Activated B cell treated with CpG ODN at 0.5 μM for 24 hours (primary cell): ENCODE measurements at regions of chr9 and their contacts with region 1.

Region 1: DNA sequence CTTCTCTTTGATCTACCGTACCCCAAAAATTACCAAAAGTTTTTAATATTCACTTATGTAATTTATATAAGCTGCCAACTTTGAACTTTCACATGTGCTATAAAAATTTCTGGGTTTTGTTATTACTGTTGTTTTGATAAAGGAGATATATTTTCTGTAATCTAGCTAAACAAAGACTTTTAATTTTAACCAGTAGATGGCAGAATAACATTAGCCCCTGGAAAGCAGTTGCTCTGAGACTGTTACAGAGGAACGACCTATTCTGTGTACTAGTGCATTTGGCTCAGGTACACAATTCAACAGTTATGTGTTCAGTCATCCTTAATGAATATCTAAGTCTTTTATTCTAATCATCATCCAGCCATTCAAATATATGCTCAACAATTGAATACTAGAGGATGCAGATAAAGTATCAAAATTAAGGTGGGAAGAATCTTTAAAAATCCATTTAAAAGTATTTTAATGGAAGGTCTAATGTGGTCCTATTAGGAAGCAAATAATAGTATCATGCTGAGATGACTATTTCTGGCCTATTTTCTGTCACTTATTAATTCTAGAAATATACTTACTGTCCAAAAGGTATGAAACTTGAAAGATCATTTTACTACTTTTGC is 8.6 kb downstream of the KLHL9 start:
- DNase-seq: no peak
- ATAC-seq: peak; percentile 81
- H3K4me3 Mint-ChIP-seq: no peak overlapping the region
- H3K27ac Mint-ChIP-seq: no peak overlapping the region
- H3K4me1 Mint-ChIP-seq: peaks cover 29% of the 10 kb centered on the region
- H3K27me3 Mint-ChIP-seq: no peaks in the 10 kb centered on the region
- CTCF ChIP-seq: peak; percentile 68

Region 2: DNA sequence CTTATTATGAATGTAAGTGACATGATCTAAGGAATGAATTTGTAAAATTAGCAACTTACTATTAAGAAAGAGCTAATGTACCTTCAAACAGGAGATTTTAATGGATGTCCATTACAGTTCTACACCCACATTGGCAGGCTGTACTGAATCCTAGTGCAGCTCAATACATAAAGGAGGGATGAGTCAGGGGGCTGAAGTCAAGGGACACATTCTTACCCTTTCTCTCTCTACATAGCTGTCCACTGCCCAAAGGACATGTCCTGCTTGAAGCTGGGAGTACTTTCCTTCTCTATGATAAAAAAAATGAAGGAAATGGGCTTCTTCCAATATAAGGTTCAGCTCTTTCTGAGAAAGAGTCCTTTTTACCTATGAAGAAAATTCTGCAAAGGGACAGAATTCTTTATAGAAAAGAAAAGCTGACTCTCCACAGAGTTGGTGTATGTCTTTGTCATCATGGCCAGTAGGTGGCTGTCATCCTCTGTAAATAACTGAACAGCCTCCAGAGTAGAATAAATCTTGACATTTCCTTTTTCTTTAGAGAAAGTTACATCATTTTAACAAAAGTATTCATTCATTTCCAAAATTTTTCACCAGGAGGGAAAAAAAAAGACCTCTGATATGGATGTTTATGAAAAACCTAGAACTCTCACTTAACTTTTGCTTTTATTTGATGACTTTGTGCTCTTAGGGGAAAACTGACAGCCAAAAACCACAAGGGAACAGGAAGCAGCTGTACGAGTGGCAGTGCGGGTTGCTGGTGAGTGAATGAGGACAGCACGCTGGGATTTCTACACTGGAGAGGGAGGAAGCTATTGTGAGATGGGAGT is 73.7 kb before region 1 on chr9:
- CTCF ChIA-PET with region 1: interaction called, 10 read pairs
- POLR2A ChIA-PET with region 1: no interaction called
- intact Hi-C with region 1: no loop called
- DNase-seq: no peak
- ATAC-seq: peak; percentile 61
- H3K4me3 Mint-ChIP-seq: no peak overlapping the region
- H3K27ac Mint-ChIP-seq: no peak overlapping the region
- H3K4me1 Mint-ChIP-seq: peaks cover 4% of the 10 kb centered on the region
- H3K27me3 Mint-ChIP-seq: peaks cover 25% of the 10 kb centered on the region
- CTCF ChIP-seq: no peak

Region 3: DNA sequence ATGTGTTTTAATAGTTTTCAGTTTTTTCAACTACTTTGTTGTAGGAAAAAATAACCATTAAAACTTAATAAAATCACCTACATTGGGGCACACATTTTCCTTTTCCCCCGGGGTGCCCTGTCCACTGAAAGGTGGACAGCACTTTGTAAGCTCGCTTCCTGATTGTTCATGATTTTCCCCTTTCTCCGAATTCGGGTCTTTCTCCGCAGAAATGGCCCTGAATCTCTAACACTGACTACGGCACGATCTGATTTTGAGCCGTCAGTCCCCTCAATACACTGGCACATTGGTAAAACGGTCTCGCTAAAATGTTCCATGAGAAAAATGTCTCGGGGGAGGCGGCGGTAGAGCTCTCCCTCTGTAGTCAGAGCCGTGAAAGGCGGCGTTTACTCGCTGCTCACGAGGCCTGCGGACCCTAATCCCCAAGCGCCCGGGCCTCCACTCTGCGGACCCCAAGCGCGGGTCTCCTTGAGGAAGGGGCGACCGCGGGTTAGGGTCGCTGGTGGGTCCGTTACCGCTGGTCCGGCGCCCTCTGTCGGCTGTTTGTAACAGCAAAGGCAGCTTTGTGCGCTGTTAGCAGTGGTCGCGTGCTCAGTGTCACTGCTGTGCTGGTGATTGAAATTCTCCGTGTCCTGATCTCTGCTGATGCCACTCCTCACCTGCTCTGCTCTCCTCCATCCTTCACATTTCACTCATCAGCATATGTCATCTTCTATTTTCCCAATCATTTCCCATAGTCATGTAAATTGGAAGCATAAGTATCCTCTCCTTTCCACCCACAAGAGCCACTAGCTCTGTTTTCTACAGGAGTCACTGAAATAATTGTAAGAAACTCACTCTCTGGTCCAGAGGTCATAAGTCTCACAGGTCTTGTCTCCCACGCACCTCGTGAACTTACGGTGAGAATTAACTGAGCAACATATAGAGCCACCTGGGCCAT is 69.4 kb after region 1 on chr9:
- CTCF ChIA-PET with region 1: interaction called, 79 read pairs
- POLR2A ChIA-PET with region 1: interaction called, 3 read pairs
- intact Hi-C with region 1: loop called (anchors 1 kb)
- DNase-seq: peak; percentile 47
- ATAC-seq: peak; percentile 65
- H3K4me3 Mint-ChIP-seq: peak overlapping the region; percentile 66
- H3K27ac Mint-ChIP-seq: no peak overlapping the region
- H3K4me1 Mint-ChIP-seq: peaks cover 12% of the 10 kb centered on the region
- H3K27me3 Mint-ChIP-seq: peaks cover 57% of the 10 kb centered on the region
- CTCF ChIP-seq: no peak

Region 4: GRCh38 chr9:21434202-21435014 is 107.8 kb after region 1 on chr9:
- CTCF ChIA-PET with region 1: interaction called, 12 read pairs
- POLR2A ChIA-PET with region 1: no interaction called
- intact Hi-C with region 1: no loop called
- DNase-seq: no peak
- ATAC-seq: no peak
- H3K4me3 Mint-ChIP-seq: no peak overlapping the region
- H3K27ac Mint-ChIP-seq: no peak overlapping the region
- H3K4me1 Mint-ChIP-seq: peaks cover 10% of the 10 kb centered on the region
- H3K27me3 Mint-ChIP-seq: peaks cover 44% of the 10 kb centered on the region
- CTCF ChIP-seq: peak; percentile 29

Region 5: DNA sequence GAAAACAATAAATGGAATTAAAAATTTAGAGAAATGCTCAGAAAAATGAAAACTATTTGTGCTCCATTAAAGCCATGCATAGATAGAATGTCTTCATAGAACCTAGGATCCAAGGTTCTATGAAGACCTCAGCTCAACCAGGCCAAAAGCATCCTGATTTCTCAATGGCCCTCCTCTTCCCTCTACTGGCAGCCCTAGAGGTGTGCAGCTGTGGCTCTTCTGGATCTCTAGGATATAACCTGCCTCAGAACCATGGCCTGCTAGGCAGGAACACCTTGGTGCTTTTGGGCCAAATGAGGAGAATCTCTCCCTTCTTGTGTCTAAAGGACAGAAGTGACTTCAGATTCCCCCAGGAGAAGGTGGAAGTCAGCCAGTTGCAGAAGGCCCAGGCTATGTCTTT is 128.7 kb after region 1 on chr9:
- CTCF ChIA-PET with region 1: interaction called, 64 read pairs
- POLR2A ChIA-PET with region 1: interaction called, 4 read pairs
- intact Hi-C with region 1: loop called (anchors 1 kb)
- DNase-seq: no peak
- ATAC-seq: peak; percentile 75
- H3K4me3 Mint-ChIP-seq: no peak overlapping the region
- H3K27ac Mint-ChIP-seq: no peak overlapping the region
- H3K4me1 Mint-ChIP-seq: no peaks in the 10 kb centered on the region
- H3K27me3 Mint-ChIP-seq: peaks cover 33% of the 10 kb centered on the region
- CTCF ChIP-seq: no peak

Region 6: DNA sequence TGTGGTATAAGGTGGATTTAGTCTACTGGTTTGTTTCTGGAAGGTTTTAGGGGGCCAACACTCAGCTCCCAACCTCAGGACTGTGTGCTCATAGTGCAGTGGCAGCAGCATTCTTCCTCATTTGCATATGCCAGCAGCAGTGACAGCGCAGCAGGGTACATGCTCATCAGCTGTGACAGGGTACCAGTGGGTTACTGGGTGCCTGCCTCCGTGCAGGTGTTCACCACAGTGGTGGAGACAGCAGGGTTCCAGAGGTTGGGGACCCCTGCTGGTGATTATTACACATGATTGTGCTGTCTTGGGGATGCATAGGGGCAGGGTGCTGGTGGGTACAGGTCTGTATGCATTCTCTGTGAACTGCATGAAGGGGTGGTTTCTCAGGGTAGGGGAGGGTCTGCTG is 200.9 kb after region 1 on chr9:
- CTCF ChIA-PET with region 1: no interaction called
- POLR2A ChIA-PET with region 1: no interaction called
- intact Hi-C with region 1: loop called (anchors 5 kb)
- DNase-seq: no peak
- ATAC-seq: peak; percentile 28
- H3K4me3 Mint-ChIP-seq: no peak overlapping the region
- H3K27ac Mint-ChIP-seq: no peak overlapping the region
- H3K4me1 Mint-ChIP-seq: peaks cover 7% of the 10 kb centered on the region
- H3K27me3 Mint-ChIP-seq: peaks cover 34% of the 10 kb centered on the region
- CTCF ChIP-seq: no peak

Region 7: DNA sequence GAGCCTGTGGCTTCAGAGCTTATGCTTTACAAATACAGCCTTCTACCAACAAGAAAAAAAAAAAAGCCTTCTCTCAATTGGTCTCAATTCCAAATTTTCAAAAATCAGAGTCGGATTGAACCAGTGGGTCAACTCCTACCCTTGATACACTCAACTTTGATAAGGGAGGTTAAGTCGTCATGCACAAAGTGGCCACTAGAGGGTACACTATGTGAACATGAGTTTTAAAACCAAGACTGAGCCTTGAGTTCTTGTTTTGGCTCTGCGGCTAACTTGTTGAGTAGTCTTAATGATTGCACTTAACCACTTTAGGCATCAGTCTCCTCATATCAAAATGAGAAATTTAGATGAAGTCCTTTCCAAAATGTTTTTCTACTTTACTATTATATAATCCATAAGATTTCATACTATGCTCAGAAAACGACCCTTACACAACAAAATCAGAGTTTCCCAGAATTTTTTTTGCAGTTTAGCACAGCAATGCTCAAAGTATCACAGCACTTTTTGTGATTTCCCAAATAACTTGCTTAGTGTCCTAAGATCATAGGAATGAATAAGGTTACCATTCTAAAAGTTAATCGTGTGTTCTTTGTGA is 382.9 kb after region 1 on chr9:
- CTCF ChIA-PET with region 1: interaction called, 12 read pairs
- POLR2A ChIA-PET with region 1: no interaction called
- intact Hi-C with region 1: loop called (anchors 1 kb)
- DNase-seq: no peak
- ATAC-seq: peak; percentile 68
- H3K4me3 Mint-ChIP-seq: no peak overlapping the region
- H3K27ac Mint-ChIP-seq: no peak overlapping the region
- H3K4me1 Mint-ChIP-seq: no peaks in the 10 kb centered on the region
- H3K27me3 Mint-ChIP-seq: peaks cover 16% of the 10 kb centered on the region
- CTCF ChIP-seq: peak; percentile 48